ENCODE measurements at regions of chr20 and their contacts with region 1.

Region 1: GRCh38 chr20:645318-646106 is 7.5 kb downstream of the SRXN1 start:
- DNase-seq: peak; percentile 92
- ATAC-seq: peak; percentile 86
- H3K4me3 Mint-ChIP-seq: no peak overlapping the region
- H3K27ac Mint-ChIP-seq: peak overlapping the region; percentile 45
- H3K4me1 Mint-ChIP-seq: peaks cover 15% of the 10 kb centered on the region
- H3K27me3 Mint-ChIP-seq: no peaks in the 10 kb centered on the region; the same call in 1 of the 2 replicates
- CTCF ChIP-seq: peak; percentile 97

Region 2: GRCh38 chr20:543369-544152 is 102.0 kb before region 1 on chr20 and contains the start of gene CSNK2A1:
- CTCF ChIA-PET with region 1: interaction called, 21 read pairs
- POLR2A ChIA-PET with region 1: interaction called, 6 read pairs
- DNase-seq: peak; percentile 96
- ATAC-seq: peak; percentile 93
- H3K4me3 Mint-ChIP-seq: peak within 1 kb of the TSS; percentile 87
- H3K27ac Mint-ChIP-seq: peak within 1 kb of the TSS; percentile 96
- H3K4me1 Mint-ChIP-seq: peaks cover 47% of the 10 kb centered on the region
- H3K27me3 Mint-ChIP-seq: peaks cover 38% of the 10 kb centered on the region
- CTCF ChIP-seq: no peak
- total RNA-seq, gene CSNK2A1: 235 to 244 TPM (median 236 TPM) in 3 replicates

Region 3: GRCh38 chr20:577167-577791 is 68.2 kb before region 1 on chr20:
- CTCF ChIA-PET with region 1: interaction called, 46 read pairs
- POLR2A ChIA-PET with region 1: interaction called, 3 read pairs
- DNase-seq: no peak
- ATAC-seq: peak; percentile 43
- H3K4me3 Mint-ChIP-seq: no peak overlapping the region
- H3K27ac Mint-ChIP-seq: no peak overlapping the region; the same call in 1 of the 2 replicates
- H3K4me1 Mint-ChIP-seq: peaks cover 41% of the 10 kb centered on the region
- H3K27me3 Mint-ChIP-seq: peaks cover 6% of the 10 kb centered on the region; the same call in 1 of the 2 replicates
- CTCF ChIP-seq: peak; percentile 26; the same call in 1 of the 2 replicates

Region 4: DNA sequence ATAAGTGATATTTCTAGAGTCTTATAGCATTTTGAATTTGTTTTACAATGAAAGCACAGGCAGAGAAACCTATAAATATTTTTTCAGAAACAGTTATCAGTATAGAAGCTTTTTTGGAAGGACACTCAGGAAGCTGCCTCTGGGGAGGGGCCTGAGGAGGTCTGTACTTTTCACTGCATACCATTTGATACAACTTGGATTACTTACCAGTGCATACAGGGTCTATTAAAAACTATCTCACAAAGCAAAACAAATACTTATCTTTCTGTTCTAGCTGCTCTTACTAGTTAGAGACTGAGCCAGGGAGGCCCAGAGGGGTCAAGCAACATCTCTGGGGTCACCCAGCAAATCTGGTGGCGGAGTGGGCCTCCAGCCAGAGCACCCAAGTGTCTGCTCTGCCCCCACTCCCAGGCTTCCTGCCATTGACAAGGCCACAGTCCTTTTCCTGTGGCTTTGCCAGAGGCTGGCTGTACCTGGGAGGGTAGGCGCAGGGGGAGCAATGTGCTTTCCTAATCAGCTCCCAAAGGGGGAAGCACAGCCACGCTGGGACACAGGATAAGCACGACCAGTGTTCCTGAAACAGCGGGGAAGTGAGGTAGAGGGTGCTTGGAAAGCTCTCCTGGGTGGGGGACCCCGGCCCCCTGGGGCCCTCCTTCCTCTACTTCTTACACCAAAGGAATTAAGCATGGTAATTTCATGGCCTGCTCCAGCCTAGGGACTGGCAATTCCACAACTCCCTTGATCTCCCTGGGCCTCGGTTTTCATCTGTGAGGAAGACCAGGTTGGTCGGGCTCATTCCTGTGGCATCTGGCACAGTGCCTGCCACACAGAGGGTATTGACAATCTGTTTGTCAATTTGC is 43.2 kb before region 1 on chr20:
- CTCF ChIA-PET with region 1: interaction called, 17 read pairs
- POLR2A ChIA-PET with region 1: no interaction called
- DNase-seq: no peak
- ATAC-seq: no peak
- H3K4me3 Mint-ChIP-seq: no peak overlapping the region
- H3K27ac Mint-ChIP-seq: 0 out of 2 replicates have a peak overlapping the region, but pooled peaks have one; percentile 64
- H3K4me1 Mint-ChIP-seq: no peaks in the 10 kb centered on the region
- H3K27me3 Mint-ChIP-seq: no peaks in the 10 kb centered on the region
- CTCF ChIP-seq: no peak

Region 5: DNA sequence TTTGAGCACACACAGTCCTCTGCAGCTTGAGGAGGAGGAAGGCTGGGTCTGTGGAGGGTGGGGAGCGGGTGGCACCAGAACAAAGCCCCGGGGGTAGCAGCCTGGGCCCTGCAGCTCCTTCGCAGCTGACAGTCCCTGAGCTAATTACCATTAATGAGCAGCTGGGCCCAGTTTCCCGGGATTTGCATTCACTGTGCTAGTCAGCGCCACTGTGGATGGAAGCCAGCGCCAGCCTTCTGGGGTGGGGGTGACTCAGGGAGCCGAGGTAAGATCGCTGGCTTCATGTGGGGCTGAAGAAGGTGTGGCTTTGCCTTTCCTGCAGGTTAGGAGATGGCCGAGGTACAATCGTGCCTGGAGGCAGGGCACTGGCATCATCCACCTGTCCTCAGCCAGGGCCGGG is 11.0 kb before region 1 on chr20:
- CTCF ChIA-PET with region 1: interaction called, 18 read pairs
- POLR2A ChIA-PET with region 1: interaction called, 3 read pairs
- DNase-seq: no peak
- ATAC-seq: peak; percentile 30
- H3K4me3 Mint-ChIP-seq: no peak overlapping the region
- H3K27ac Mint-ChIP-seq: no peak overlapping the region
- H3K4me1 Mint-ChIP-seq: peaks cover 6% of the 10 kb centered on the region; the same call in 1 of the 2 replicates
- H3K27me3 Mint-ChIP-seq: no peaks in the 10 kb centered on the region; the same call in none of the 2 replicates
- CTCF ChIP-seq: no peak

Region 6: DNA sequence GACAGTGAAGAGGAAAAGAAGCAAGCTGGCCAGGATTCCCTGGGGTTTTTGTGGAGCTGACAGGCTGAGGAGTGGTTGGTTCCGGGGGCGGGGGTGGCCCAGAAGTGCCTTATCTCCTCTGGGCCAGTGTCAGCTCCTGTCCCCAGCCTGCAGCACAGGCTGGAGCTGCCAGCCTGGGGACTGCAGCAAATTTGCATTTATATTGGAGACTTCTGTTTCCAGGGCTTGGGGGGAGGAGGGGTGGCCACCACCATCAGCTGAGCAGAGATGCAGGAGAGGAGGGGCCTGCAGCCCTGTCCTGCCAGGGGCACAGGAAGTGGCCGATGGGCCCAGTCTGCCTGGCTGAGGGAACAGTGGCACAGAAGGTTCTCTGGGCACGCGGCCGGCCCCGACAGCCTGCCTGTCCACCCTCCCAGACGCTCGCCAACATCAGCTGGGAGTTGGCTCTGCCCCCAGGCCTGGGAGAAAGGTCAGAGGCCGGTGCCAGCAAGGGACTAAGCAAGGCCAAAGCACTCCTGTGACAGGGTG is 54.4 kb after region 1 on chr20:
- CTCF ChIA-PET with region 1: interaction called, 11 read pairs
- POLR2A ChIA-PET with region 1: no interaction called
- DNase-seq: peak; percentile 51
- ATAC-seq: peak; percentile 82
- H3K4me3 Mint-ChIP-seq: no peak overlapping the region
- H3K27ac Mint-ChIP-seq: no peak overlapping the region
- H3K4me1 Mint-ChIP-seq: peaks cover 30% of the 10 kb centered on the region
- H3K27me3 Mint-ChIP-seq: peaks cover 3% of the 10 kb centered on the region; the same call in 1 of the 2 replicates
- CTCF ChIP-seq: no peak

Region 7: DNA sequence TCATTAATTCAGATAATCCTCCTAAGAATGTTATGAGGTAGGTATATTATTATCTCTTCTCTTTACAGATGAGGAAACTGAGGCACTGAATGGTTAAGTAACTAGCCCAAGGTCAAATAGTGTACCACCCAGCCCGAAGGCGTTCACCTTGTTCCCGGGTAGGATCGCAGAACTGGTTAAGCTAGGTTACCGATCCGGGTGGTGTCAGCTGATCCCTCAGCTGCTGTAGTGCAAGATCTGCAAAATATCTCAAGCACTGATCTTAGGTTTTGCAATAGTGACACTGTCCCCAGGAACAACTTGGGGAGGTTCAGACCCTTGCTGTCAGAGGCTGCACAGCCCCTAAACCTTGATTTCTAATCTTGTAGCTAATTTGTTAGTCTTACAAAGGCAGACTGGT is 94.6 kb after region 1 on chr20:
- CTCF ChIA-PET with region 1: interaction called, 42 read pairs
- POLR2A ChIA-PET with region 1: no interaction called
- DNase-seq: no peak
- ATAC-seq: no peak
- H3K4me3 Mint-ChIP-seq: no peak overlapping the region
- H3K27ac Mint-ChIP-seq: no peak overlapping the region
- H3K4me1 Mint-ChIP-seq: peaks cover 7% of the 10 kb centered on the region
- H3K27me3 Mint-ChIP-seq: peaks cover 30% of the 10 kb centered on the region
- CTCF ChIP-seq: no peak

Region 8: DNA sequence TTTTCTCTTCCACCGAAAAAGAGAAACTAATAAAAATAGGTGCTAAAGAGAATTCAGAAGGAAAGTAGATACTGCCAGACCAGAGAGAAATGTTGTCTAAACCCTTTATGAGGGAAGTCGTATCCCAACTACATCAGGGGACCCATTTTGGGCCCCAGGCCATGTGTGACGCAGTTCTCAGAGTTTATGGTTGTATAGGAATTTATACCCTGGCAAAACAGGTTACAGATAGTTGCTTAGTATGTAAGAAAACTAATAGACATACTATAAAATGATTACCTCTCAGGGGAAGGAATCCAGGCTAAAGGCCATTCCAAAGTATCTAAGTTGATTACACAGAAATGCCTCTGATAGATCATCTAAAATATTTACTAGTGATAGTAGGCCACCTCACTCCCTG is 151.4 kb after region 1 on chr20:
- CTCF ChIA-PET with region 1: no interaction called
- POLR2A ChIA-PET with region 1: no interaction called
- DNase-seq: no peak
- ATAC-seq: no peak
- H3K4me3 Mint-ChIP-seq: no peak overlapping the region
- H3K27ac Mint-ChIP-seq: no peak overlapping the region
- H3K4me1 Mint-ChIP-seq: peaks cover 7% of the 10 kb centered on the region
- H3K27me3 Mint-ChIP-seq: peaks cover 35% of the 10 kb centered on the region
- CTCF ChIP-seq: no peak

Measured in WTC11 (cell line).